ENCODE measurements at regions of chr3 and their contacts with region 1.

Region 1: GRCh38 chr3:194757647-194758061 is 72.0 kb downstream of the FAM43A start:
- DNase-seq: no peak
- ATAC-seq: no peak
- H3K4me3 ChIP-seq: no peak overlapping the region
- H3K4me3 Mint-ChIP-seq: no peak overlapping the region
- H3K27ac ChIP-seq: no peak overlapping the region
- H3K27ac Mint-ChIP-seq: no peak overlapping the region
- H3K4me1 ChIP-seq: no peaks in the 10 kb centered on the region
- H3K4me1 Mint-ChIP-seq: no peaks in the 10 kb centered on the region
- H3K27me3 ChIP-seq: peaks cover 0 to 5% of the 10 kb centered on the region in 2 experiments
- H3K27me3 Mint-ChIP-seq: peaks cover 31% of the 10 kb centered on the region
- CTCF ChIP-seq: no peak

Region 2: GRCh38 chr3:194134757-194135528 is 622.7 kb before region 1 on chr3:
- CTCF ChIA-PET with region 1: no interaction called
- POLR2A ChIA-PET with region 1: no interaction called
- intact Hi-C with region 1: no loop called
- DNase-seq: peak; percentile 61 to 92 (median 76)
- ATAC-seq: peak; percentile 65
- H3K4me3 ChIP-seq: peak overlapping the region; percentile 52
- H3K4me3 Mint-ChIP-seq: peak overlapping the region; percentile 91
- H3K27ac ChIP-seq: peak overlapping the region in 1 of 2 donors; percentile 26
- H3K27ac Mint-ChIP-seq: peak overlapping the region; percentile 88
- H3K4me1 ChIP-seq: peaks cover 54% of the 10 kb centered on the region
- H3K4me1 Mint-ChIP-seq: peaks cover 60% of the 10 kb centered on the region
- H3K27me3 ChIP-seq: peaks cover 59 to 61% of the 10 kb centered on the region in 2 experiments
- H3K27me3 Mint-ChIP-seq: peaks cover 57% of the 10 kb centered on the region
- CTCF ChIP-seq: no peak

Region 3: DNA sequence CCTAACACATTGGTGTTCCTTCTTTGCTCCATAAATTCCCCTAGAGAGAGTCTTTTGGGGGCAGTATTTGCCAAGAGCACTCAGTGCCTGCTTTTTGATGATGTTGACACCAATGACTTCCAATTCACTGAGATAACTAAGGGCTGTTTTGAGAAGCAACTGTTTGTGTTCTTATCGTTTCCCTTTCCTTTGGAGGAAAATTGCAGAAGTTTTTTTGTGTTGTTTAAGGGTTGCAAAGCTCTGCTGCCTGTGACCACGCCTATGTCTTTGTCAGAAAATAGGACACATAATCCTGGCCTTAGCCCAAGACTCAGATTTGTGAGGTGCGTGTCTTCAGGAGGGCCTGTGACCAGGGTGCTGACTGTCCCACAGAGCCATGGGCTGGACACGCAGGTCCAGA is 27.7 kb after region 1 on chr3:
- CTCF ChIA-PET with region 1: no interaction called
- POLR2A ChIA-PET with region 1: no interaction called
- intact Hi-C with region 1: loop called in 1 of 2 experiments (anchors 2 kb)
- DNase-seq: no peak
- ATAC-seq: no peak
- H3K4me3 ChIP-seq: no peak overlapping the region
- H3K4me3 Mint-ChIP-seq: no peak overlapping the region
- H3K27ac ChIP-seq: no peak overlapping the region
- H3K27ac Mint-ChIP-seq: no peak overlapping the region
- H3K4me1 ChIP-seq: no peaks in the 10 kb centered on the region
- H3K4me1 Mint-ChIP-seq: no peaks in the 10 kb centered on the region
- H3K27me3 ChIP-seq: peaks cover 0 to 3% of the 10 kb centered on the region in 2 experiments
- H3K27me3 Mint-ChIP-seq: peaks cover 7% of the 10 kb centered on the region
- CTCF ChIP-seq: no peak

Measured in CD4-positive, alpha-beta T cell (primary cell).